SK-N-SH (cell line): ENCODE measurements at regions of chr17 and their contacts with region 1.

Region 1: GRCh38 chr17:75749545-75750389 is 15.2 kb downstream of the GALK1 start:
- DNase-seq: peak; percentile 94
- H3K4me3 ChIP-seq: peak overlapping the region in 1 of 2 experiments; percentile 30; a peak in 2 of 4 replicates
- H3K27ac ChIP-seq: no peak overlapping the region
- H3K4me1 ChIP-seq: peaks cover 0 to 23% of the 10 kb centered on the region in 2 experiments; a peak in 1 of 4 replicates
- H3K27me3 ChIP-seq: no peaks in the 10 kb centered on the region
- CTCF ChIP-seq: peak; percentile 99
- EP300 ChIP-seq: no peak
- RAD21 ChIP-seq: peak; percentile 82

Region 2: DNA sequence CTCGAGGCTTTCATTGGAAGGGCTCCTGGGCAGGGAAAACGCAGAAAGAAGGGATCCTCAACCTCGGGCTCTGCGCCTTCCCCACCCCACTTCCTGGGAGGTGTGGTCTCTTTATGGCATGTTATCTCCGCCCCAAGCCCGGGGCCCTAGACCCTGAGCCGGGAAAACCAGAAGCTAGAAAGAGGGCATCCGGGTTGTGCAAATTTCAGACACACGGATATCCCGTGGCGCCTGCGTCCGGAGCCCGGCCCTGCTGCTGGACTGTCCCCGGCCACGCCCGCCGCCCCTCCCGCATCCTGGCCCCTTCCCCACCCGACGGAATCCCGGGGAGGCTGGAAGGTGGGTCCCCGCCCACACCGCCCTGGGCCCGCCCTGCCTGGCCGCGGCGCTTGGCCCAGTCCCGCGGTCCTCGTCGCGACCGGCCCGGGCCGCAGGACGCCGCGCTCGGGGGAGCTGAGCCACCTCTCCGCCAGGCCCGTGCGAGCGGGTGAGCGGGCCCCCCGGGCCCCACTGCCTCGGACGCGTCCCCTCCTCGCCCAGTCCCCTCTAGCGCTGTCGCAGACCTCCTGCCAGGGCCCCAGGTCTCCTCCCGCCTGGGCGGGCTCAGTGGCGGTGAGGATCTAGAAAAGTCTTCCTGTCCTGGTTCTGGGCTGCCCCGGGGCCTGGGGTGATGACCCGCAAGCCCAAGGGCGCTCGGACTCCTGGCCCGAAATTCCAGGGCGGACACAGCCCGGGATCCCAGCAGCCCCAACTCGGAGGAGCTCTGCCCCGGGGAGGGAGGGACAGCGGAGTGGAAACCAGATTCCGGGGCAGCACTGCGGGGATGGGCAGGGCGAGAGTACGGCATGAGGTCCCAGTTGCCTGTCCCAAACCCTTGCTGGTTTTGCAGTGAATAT is 662.0 kb before region 1 on chr17 and contains the start of gene SLC16A5:
- CTCF ChIA-PET with region 1: no interaction called
- POLR2A ChIA-PET with region 1: no interaction called
- DNase-seq: no peak
- H3K4me3 ChIP-seq: no peak within 1 kb of the TSS
- H3K27ac ChIP-seq: no peak within 1 kb of the TSS
- H3K4me1 ChIP-seq: peaks cover 0 to 10% of the 10 kb centered on the region in 2 experiments; a peak in 1 of 4 replicates
- H3K27me3 ChIP-seq: no peaks in the 10 kb centered on the region
- CTCF ChIP-seq: no peak
- EP300 ChIP-seq: no peak
- RAD21 ChIP-seq: no peak
- polyA plus RNA-seq, gene SLC16A5: 0.03 and 0.06 TPM in 2 replicates

Region 3: GRCh38 chr17:75138519-75138918 is 611.2 kb before region 1 on chr17:
- CTCF ChIA-PET with region 1: no interaction called
- POLR2A ChIA-PET with region 1: no interaction called
- DNase-seq: no peak
- H3K4me3 ChIP-seq: no peak overlapping the region
- H3K27ac ChIP-seq: no peak overlapping the region; a peak in 1 of 4 replicates
- H3K4me1 ChIP-seq: no peaks in the 10 kb centered on the region
- H3K27me3 ChIP-seq: no peaks in the 10 kb centered on the region
- CTCF ChIP-seq: no peak
- EP300 ChIP-seq: no peak
- RAD21 ChIP-seq: no peak

Region 4: GRCh38 chr17:75589012-75589918 is 160.5 kb before region 1 on chr17:
- CTCF ChIA-PET with region 1: interaction called, 17 read pairs
- POLR2A ChIA-PET with region 1: no interaction called
- DNase-seq: peak; percentile 100
- H3K4me3 ChIP-seq: peak overlapping the region; percentile 62 to 64
- H3K27ac ChIP-seq: peak overlapping the region in 1 of 2 experiments; percentile 53; a peak in 1 of 4 replicates
- H3K4me1 ChIP-seq: peaks cover 0 to 16% of the 10 kb centered on the region in 2 experiments; a peak in 1 of 4 replicates
- H3K27me3 ChIP-seq: no peaks in the 10 kb centered on the region
- CTCF ChIP-seq: peak; percentile 60
- EP300 ChIP-seq: peak in 1 of 2 experiments; percentile 68; a peak in 1 of 4 replicates
- RAD21 ChIP-seq: peak; percentile 34

Region 5: DNA sequence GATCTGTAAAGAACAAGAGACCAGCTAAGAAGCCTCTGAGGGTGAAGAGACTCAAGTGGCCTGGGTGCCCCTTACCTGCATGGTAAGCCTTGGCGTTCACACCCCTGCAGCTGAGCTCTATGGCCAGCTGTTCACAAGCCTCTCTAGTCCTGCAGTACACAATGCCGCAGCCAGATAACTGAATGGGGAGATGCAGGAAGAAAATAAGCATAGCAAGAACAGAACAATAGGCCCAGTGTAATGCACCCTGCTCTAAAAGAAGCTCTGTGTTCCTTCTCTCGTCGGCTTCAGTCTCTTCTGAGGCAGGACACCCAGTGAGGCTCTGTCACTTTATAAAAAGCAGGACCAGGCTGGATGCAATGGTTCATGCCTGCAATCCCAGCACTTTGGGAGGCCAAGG is 88.2 kb before region 1 on chr17:
- CTCF ChIA-PET with region 1: interaction called, 192 read pairs
- POLR2A ChIA-PET with region 1: interaction called, 4 read pairs
- DNase-seq: no peak
- H3K4me3 ChIP-seq: no peak overlapping the region
- H3K27ac ChIP-seq: no peak overlapping the region
- H3K4me1 ChIP-seq: peaks cover 7 to 8% of the 10 kb centered on the region in 2 experiments; a peak in 3 of 4 replicates
- H3K27me3 ChIP-seq: no peaks in the 10 kb centered on the region
- CTCF ChIP-seq: no peak
- EP300 ChIP-seq: no peak
- RAD21 ChIP-seq: no peak

Region 6: DNA sequence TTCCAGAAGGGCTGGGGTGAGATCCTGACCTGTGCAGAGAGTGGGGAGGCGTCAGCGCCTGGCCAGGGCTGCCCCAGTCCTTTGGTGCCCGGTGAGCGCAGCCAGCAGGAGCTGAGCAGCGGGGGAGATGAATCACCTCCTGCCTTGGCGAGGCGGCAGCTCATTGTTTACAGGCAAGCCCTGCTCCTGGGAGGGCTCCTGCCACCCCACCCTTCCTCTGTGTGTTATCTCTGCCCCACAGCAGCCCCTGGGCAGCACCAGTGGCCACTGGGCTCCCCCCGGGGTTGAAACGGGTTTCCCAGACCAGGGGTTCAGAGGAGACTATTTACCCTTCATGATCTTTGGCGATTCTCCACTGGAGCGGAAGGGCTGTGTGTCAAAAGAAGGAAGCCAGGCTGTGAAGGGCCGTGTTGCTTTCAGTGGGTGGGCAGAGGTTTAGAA is 42.6 kb before region 1 on chr17:
- CTCF ChIA-PET with region 1: interaction called, 25 read pairs
- POLR2A ChIA-PET with region 1: no interaction called
- DNase-seq: no peak
- H3K4me3 ChIP-seq: no peak overlapping the region
- H3K27ac ChIP-seq: peak overlapping the region in 1 of 2 experiments; percentile 7; a peak in 2 of 4 replicates
- H3K4me1 ChIP-seq: peaks cover 0 to 17% of the 10 kb centered on the region in 2 experiments; a peak in 2 of 4 replicates
- H3K27me3 ChIP-seq: no peaks in the 10 kb centered on the region
- CTCF ChIP-seq: no peak
- EP300 ChIP-seq: peak in 1 of 2 experiments; percentile 54; a peak in 1 of 4 replicates
- RAD21 ChIP-seq: no peak

Region 7: DNA sequence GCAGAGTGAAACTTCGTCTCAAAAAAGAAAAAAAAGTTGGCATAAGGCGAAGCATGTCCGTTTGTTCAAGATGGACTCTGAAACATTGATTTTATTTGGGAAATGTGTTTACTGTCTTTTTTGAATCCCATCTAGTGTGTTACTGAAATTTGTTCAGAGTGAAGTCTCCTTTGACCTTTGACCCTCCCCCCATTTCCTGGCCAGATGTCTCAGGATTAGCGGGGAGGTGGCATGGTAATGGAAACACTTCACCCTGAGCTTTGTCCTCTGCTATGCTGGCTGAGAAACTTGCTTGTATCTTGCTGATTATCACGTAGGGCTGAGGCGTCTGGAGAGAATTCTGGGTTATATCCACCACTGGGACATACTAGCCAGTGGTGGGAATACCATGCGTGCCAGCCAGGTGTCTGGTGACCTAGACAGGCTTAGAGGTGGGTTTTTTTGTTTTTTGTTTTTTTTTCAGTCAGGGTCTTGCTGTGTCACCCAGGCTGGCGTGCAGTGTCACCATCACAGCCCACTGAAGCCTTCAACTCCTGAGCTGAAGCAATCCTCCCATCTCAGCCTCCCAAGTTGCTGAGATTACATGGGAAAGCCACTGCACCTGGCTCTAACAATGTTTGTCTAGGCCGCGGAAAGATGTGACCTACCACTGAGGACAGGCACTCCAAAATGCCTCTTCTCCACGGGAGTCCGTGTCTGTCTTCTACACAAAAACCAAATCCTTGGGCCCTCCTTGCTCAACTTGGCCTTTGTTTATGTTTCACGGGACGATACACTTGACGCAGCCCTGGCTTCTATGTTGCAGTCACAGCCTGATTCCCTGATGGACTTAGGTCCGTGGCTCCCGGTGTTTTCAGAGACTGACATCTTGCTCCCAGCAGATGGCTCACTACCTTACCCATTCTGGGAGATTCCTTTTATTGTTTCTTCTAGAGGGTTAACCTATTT is 21.8 kb after region 1 on chr17:
- CTCF ChIA-PET with region 1: interaction called, 218 read pairs
- POLR2A ChIA-PET with region 1: interaction called, 52 read pairs
- DNase-seq: no peak
- H3K4me3 ChIP-seq: no peak overlapping the region
- H3K27ac ChIP-seq: no peak overlapping the region
- H3K4me1 ChIP-seq: peaks cover 0 to 9% of the 10 kb centered on the region in 2 experiments; a peak in 2 of 4 replicates
- H3K27me3 ChIP-seq: no peaks in the 10 kb centered on the region
- CTCF ChIP-seq: peak; percentile 32
- EP300 ChIP-seq: no peak
- RAD21 ChIP-seq: peak; percentile 33; the same call in 1 of the 2 replicates

Region 8: GRCh38 chr17:75814900-75815373 is 65.2 kb after region 1 on chr17:
- CTCF ChIA-PET with region 1: interaction called, 10 read pairs
- POLR2A ChIA-PET with region 1: no interaction called
- DNase-seq: peak; percentile 47
- H3K4me3 ChIP-seq: no peak overlapping the region
- H3K27ac ChIP-seq: peak overlapping the region; percentile 29 to 63; a peak in 3 of 4 replicates
- H3K4me1 ChIP-seq: peaks cover 0 to 10% of the 10 kb centered on the region in 2 experiments; a peak in 3 of 4 replicates
- H3K27me3 ChIP-seq: no peaks in the 10 kb centered on the region
- CTCF ChIP-seq: no peak
- EP300 ChIP-seq: no peak
- RAD21 ChIP-seq: no peak